ENCODE measurements at regions of chr9 and their contacts with region 1.

Region 1: GRCh38 chr9:33374634-33375213 is 27.6 kb downstream of the AQP7 start:
- DNase-seq: peak; percentile 77
- H3K4me3 ChIP-seq: no peak overlapping the region
- H3K27ac ChIP-seq: no peak overlapping the region
- H3K4me1 ChIP-seq: no peaks in the 10 kb centered on the region
- H3K27me3 ChIP-seq: no peaks in the 10 kb centered on the region
- CTCF ChIP-seq: peak; percentile 56 to 92 (median 88)
- POLR2A ChIP-seq: no peak

Region 2: GRCh38 chr9:33290247-33291030 is 84.3 kb before region 1 on chr9 and contains the start of gene NFX1:
- intact Hi-C with region 1: no loop called
- DNase-seq: peak; percentile 96
- H3K4me3 ChIP-seq: peak within 1 kb of the TSS; percentile 72
- H3K27ac ChIP-seq: peak within 1 kb of the TSS; percentile 97
- H3K4me1 ChIP-seq: peaks cover 3% of the 10 kb centered on the region
- H3K27me3 ChIP-seq: no peaks in the 10 kb centered on the region
- CTCF ChIP-seq: peak in 1 of 4 experiments; percentile 33
- POLR2A ChIP-seq: peak; percentile 92
- total RNA-seq, gene NFX1: 30.8 to 39.5 TPM

Region 3: GRCh38 chr9:33415501-33416038 is 40.8 kb after region 1 on chr9:
- intact Hi-C with region 1: loop called (anchors 5 kb)
- DNase-seq: peak; percentile 95
- H3K4me3 ChIP-seq: no peak overlapping the region
- H3K27ac ChIP-seq: peak overlapping the region; percentile 73 to 79
- H3K4me1 ChIP-seq: peaks cover 16% of the 10 kb centered on the region
- H3K27me3 ChIP-seq: no peaks in the 10 kb centered on the region
- CTCF ChIP-seq: peak; percentile 60 to 84 (median 70)
- POLR2A ChIP-seq: peak; percentile 32

Region 4: DNA sequence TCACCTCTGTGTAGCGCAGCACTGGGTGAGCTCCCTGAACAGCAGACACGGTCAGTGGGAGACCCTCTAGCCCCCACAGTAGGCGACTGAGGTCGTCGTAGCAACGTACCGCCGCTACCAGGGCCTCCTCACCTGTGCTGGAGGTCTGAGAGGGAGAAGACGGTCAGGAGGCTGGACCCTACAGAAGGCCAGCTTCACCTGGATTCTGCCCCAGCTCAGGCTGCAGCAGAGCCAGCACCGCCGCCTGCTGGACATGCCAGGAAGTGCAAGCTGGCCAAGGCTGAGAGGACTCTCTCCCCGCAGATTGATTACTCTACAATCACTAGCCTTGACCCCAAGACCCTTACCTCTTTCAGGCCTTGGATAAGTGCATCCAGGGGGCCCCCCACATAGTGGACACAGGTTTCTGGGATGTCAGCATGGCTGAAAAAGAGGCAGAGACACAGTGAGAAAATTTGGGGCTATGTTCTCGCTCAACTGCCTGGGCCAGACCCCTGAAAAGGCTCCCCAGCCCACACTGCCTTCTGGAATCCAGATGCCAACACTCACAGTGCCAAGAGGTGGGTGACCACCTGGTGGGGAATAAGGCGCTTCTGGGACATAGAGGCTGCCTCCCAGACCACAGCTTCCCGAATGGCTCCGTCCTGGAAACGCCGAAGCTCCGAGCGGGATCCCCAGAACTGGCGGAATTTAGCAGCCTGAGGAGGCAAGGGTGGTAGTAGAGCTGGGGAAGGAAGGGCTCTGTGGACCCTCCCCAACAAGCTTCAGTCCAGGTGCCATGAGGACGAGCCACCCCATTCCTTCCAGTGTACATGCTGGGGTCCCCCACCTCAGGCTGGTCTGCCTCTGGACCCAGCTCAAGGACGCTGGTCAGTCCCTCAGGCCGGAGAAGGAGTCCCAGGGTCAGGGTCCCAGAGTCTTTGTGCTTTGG is 92.1 kb after region 1 on chr9:
- intact Hi-C with region 1: loop called (anchors 5 kb)
- DNase-seq: peak; percentile 64
- H3K4me3 ChIP-seq: no peak overlapping the region
- H3K27ac ChIP-seq: no peak overlapping the region
- H3K4me1 ChIP-seq: peaks cover 3% of the 10 kb centered on the region
- H3K27me3 ChIP-seq: no peaks in the 10 kb centered on the region
- CTCF ChIP-seq: peak; percentile 89 to 98 (median 94)
- POLR2A ChIP-seq: no peak

Region 5: DNA sequence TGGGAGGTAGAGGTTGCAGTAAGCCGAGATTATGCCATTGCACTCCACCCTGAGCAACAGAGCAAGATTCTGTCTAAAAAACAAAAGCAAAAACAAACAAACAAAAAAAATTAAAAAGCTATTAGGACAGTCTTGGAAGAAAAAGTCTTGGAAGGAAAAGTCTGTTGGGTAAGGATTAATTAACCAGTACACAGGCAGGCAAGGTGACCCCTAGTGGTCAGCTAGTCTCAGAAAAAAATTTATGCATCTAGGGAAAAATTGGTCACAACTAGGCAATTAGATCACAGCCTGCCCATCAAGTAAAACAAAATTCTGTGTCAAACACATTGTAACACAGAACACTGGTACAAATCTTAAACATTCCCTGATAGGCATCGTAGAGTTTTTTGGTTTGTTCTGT is 142.6 kb after region 1 on chr9:
- intact Hi-C with region 1: no loop called
- DNase-seq: no peak
- H3K4me3 ChIP-seq: no peak overlapping the region
- H3K27ac ChIP-seq: no peak overlapping the region
- H3K4me1 ChIP-seq: no peaks in the 10 kb centered on the region
- H3K27me3 ChIP-seq: no peaks in the 10 kb centered on the region
- CTCF ChIP-seq: peak; percentile 21 to 55 (median 39)
- POLR2A ChIP-seq: no peak

Measured in prostate gland (tissue), 2 donors.